T-cell (primary cell): ENCODE measurements at regions of chr4 and their contacts with region 1.

Region 1: DNA sequence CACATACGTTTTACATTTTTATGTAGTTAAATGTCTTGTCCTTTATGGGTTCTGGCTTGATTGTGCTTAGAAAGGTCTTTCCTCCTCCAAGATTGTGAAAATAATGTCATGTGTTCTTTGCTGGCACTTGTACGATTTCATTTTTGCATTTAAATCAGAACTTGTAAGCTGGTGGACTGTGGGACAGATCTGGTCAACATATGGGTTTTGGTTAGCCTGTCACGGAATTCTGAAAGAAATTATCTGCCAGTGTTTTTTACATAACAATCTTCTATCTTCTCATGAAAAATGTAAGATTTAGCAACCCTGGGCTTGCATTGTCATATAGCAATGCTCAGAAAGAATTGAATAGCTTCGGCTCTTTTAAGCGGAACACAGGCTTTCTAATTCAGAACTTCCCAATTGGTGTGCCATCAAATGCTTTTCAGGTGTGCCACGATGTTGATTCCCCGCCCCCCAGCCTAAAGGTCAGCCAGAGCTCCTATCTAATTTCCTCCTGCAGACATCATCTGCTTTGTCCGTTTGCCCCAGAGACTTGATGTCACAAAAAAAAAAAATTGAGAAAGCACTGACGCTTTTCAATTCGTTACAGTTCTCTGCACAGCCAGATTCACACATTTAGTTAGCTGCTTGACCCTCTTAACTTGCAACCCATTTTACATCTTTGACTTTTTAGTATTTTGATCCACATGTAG is 16.2 kb downstream of the AFF1 start:
- DNase-seq: no peak
- ATAC-seq: no peak
- H3K4me3 ChIP-seq: no peak overlapping the region
- H3K4me3 Mint-ChIP-seq: no peak overlapping the region
- H3K27ac ChIP-seq: no peak overlapping the region
- H3K27ac Mint-ChIP-seq: peak overlapping the region in 1 of 2 donors; percentile 39
- H3K4me1 ChIP-seq: peaks cover 6 to 9% of the 10 kb centered on the region in 2 experiments
- H3K4me1 Mint-ChIP-seq: peaks cover 24 to 53% (median 52%) of the 10 kb centered on the region in 3 donors
- H3K27me3 ChIP-seq: no peaks in the 10 kb centered on the region
- H3K27me3 Mint-ChIP-seq: no peaks in the 10 kb centered on the region

Region 2: GRCh38 chr4:86973668-86974067 is 22.7 kb after region 1 on chr4:
- CTCF ChIA-PET with region 1: no interaction called
- POLR2A ChIA-PET with region 1: no interaction called
- DNase-seq: no peak
- ATAC-seq: no peak
- H3K4me3 ChIP-seq: no peak overlapping the region
- H3K4me3 Mint-ChIP-seq: no peak overlapping the region
- H3K27ac ChIP-seq: no peak overlapping the region
- H3K27ac Mint-ChIP-seq: peak overlapping the region in 1 of 2 donors; percentile 24
- H3K4me1 ChIP-seq: no peaks in the 10 kb centered on the region
- H3K4me1 Mint-ChIP-seq: peaks cover 63 to 72% (median 66%) of the 10 kb centered on the region in 3 donors
- H3K27me3 ChIP-seq: no peaks in the 10 kb centered on the region
- H3K27me3 Mint-ChIP-seq: no peaks in the 10 kb centered on the region

Region 3: GRCh38 chr4:87044511-87045233 is 93.7 kb after region 1 on chr4:
- CTCF ChIA-PET with region 1: no interaction called
- POLR2A ChIA-PET with region 1: interaction called in 1 of 2 experiments, 11 read pairs
- DNase-seq: no peak
- ATAC-seq: no peak
- H3K4me3 ChIP-seq: no peak overlapping the region
- H3K4me3 Mint-ChIP-seq: no peak overlapping the region
- H3K27ac ChIP-seq: no peak overlapping the region
- H3K27ac Mint-ChIP-seq: no peak overlapping the region
- H3K4me1 ChIP-seq: peaks cover 2 to 18% of the 10 kb centered on the region in 2 experiments
- H3K4me1 Mint-ChIP-seq: peaks cover 26 to 56% (median 50%) of the 10 kb centered on the region in 3 donors
- H3K27me3 ChIP-seq: no peaks in the 10 kb centered on the region
- H3K27me3 Mint-ChIP-seq: no peaks in the 10 kb centered on the region

Region 4: GRCh38 chr4:87227751-87228151 is 276.8 kb after region 1 on chr4:
- CTCF ChIA-PET with region 1: no interaction called
- POLR2A ChIA-PET with region 1: interaction called in 1 of 2 experiments, 10 read pairs
- DNase-seq: no peak
- ATAC-seq: no peak
- H3K4me3 ChIP-seq: no peak overlapping the region
- H3K4me3 Mint-ChIP-seq: no peak overlapping the region
- H3K27ac ChIP-seq: no peak overlapping the region
- H3K27ac Mint-ChIP-seq: no peak overlapping the region
- H3K4me1 ChIP-seq: no peaks in the 10 kb centered on the region
- H3K4me1 Mint-ChIP-seq: no peaks in the 10 kb centered on the region
- H3K27me3 ChIP-seq: no peaks in the 10 kb centered on the region
- H3K27me3 Mint-ChIP-seq: no peaks in the 10 kb centered on the region